AG04450 (cell line): ENCODE measurements at regions of chr20 and their contacts with region 1.

Region 1: GRCh38 chr20:62921119-62921687 is 5.1 kb downstream of the DIDO1 start:
- DNase-seq: no peak
- H3K4me3 ChIP-seq: no peak overlapping the region
- H3K27ac ChIP-seq: no peak overlapping the region
- H3K27me3 ChIP-seq: no peaks in the 10 kb centered on the region
- CTCF ChIP-seq: peak; percentile 61

Region 2: DNA sequence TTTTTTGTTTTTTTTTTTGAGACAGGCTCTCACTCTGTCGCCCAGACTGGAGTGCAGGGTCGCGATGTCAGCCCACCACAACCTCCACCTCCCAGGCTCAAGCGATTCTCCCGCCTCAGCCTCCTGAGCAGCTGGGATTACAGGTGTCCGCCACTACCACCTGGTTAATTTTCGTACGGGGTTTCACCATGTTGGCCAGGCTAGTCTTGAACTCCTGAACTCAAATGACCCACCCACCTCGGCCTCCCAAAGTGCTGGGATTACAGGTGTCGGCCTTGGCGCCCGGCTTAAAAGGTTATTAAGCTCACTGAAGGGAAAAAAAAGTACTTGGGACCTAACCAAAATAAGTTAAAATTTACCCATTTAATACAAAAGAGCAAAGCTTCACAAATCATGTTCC is 61.5 kb before region 1 on chr20:
- CTCF ChIA-PET with region 1: interaction called, 10 read pairs
- POLR2A ChIA-PET with region 1: no interaction called
- DNase-seq: no peak
- H3K4me3 ChIP-seq: peak overlapping the region; percentile 68; the same call in 1 of the 2 replicates
- H3K27ac ChIP-seq: no peak overlapping the region
- H3K27me3 ChIP-seq: no peaks in the 10 kb centered on the region
- CTCF ChIP-seq: no peak

Region 3: GRCh38 chr20:62900052-62900691 is 21.0 kb before region 1 on chr20:
- CTCF ChIA-PET with region 1: interaction called, 11 read pairs
- POLR2A ChIA-PET with region 1: interaction called, 6 read pairs
- DNase-seq: peak; percentile 33
- H3K4me3 ChIP-seq: no peak overlapping the region
- H3K27ac ChIP-seq: no peak overlapping the region
- H3K27me3 ChIP-seq: no peaks in the 10 kb centered on the region
- CTCF ChIP-seq: peak; percentile 88